ENCODE measurements at regions of chr12 and their contacts with region 1.

Region 1: GRCh38 chr12:65169320-65170208 is at the start of gene LEMD3:
- DNase-seq: peak; percentile 95
- H3K4me3 Mint-ChIP-seq: peak within 1 kb of the TSS; percentile 99
- H3K27ac Mint-ChIP-seq: peak within 1 kb of the TSS; percentile 97
- H3K4me1 Mint-ChIP-seq: peaks cover 26% of the 10 kb centered on the region
- H3K27me3 Mint-ChIP-seq: no peaks in the 10 kb centered on the region
- total RNA-seq, gene LEMD3: 16.5 to 19.5 TPM

Region 2: DNA sequence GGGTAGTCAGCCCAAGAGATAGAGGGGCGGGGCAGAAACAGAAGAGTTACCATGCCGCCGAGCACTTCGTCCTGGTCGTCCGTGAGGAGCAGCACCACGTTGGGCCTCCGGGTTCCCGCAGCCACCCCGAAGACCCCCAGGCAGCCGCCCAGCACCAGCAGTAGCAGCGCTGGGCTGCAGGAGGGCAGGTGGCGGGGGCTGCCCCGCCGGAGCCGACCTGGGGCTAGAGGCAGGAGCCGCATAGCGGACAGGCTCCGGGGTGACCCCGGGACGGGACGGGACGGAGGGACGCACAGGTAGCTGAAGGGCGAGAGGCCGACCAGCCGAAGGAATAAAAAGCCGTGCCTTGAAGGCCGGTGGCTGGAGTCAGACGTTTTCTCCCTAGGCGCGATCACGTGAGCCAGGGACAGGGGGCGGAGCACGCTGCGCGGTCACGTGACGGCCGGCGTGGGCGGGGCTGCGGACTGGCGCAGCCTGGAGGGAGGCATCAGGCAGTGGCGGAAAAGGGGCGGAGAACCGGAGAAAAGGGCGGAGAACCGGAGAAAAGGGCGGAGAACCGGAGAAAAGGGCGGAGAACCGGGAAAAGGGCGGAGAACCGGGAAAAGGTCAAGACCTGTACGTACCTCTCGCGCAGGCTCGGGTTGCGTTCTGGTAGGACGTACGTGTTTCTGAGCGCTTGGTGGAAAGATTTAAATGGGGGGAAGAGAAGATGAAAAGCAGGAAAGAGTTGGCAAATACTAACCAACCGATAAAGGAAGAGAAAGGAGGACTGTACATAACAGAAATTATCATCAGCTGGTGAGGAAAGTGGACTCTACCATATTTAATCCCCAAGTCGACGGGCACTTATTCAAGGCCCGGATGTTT is 410.3 kb before region 1 on chr12 and contains the start of gene GNS:
- CTCF ChIA-PET with region 1: no interaction called
- POLR2A ChIA-PET with region 1: no interaction called
- intact Hi-C with region 1: loop called (anchors 2 kb)
- DNase-seq: peak; percentile 97
- H3K4me3 Mint-ChIP-seq: peak within 1 kb of the TSS; percentile 85
- H3K27ac Mint-ChIP-seq: peak within 1 kb of the TSS; percentile 90
- H3K4me1 Mint-ChIP-seq: peaks cover 43% of the 10 kb centered on the region
- H3K27me3 Mint-ChIP-seq: no peaks in the 10 kb centered on the region
- total RNA-seq, gene GNS: 21.2 to 23.1 TPM

Region 3: DNA sequence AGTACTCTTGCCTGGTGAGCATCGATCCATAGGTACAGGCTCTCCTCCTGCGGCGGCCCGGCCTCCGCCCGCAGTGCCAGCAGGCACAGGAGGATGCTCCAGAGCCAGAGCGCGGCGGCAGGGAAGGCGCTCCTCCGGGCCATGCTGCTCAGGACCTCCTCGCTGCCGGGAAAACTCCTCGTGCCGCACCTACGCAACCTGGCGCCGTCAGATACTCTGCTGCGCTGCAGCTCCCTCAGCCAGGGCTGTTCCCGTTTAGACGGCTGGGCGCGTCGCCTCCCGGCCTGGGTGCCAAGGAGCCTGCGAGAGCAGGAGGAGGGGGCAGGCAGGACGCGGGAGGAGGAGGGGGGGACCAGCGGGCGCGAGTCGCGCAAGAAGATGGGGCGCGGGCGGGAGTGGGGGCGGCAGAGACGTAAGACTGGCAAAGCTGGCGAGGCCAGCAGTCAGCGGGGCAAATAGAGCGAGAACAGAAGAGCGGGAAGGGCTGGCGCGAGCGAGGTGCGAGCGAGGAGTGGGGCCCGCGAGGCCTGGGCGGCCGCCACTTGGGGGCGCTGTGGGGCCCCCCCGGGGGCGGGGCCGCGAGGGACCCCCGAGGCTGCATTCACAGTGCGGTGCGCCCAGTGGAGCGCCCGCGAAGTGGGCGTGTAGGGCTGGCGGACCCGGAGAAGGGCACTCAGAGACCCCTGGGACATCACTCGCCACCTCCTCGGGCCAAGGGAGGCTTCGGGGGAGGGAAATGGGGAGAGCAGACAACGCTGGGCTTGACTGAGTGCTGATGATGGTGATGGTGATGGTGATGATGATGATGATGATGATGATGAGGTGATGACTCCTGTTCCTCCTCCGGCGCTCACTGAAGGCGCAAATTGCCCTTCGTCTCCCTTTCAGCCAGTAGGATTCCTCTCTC is 48.3 kb before region 1 on chr12 and contains the start of gene WIF1:
- CTCF ChIA-PET with region 1: interaction called, 4 read pairs
- POLR2A ChIA-PET with region 1: no interaction called
- intact Hi-C with region 1: loop called (anchors 5 kb)
- DNase-seq: peak; percentile 29
- H3K4me3 Mint-ChIP-seq: no peak within 1 kb of the TSS
- H3K27ac Mint-ChIP-seq: no peak within 1 kb of the TSS
- H3K4me1 Mint-ChIP-seq: peaks cover 6% of the 10 kb centered on the region
- H3K27me3 Mint-ChIP-seq: peaks cover 35% of the 10 kb centered on the region
- total RNA-seq, gene WIF1: 0.12 TPM in 1 of 2 experiments, not detected in the other

Region 4: GRCh38 chr12:65156366-65156841 is 13.2 kb before region 1 on chr12:
- CTCF ChIA-PET with region 1: interaction called, 12 read pairs
- POLR2A ChIA-PET with region 1: interaction called, 21 read pairs
- intact Hi-C with region 1: loop called (anchors 1 kb)
- DNase-seq: peak; percentile 14
- H3K4me3 Mint-ChIP-seq: peak overlapping the region; percentile 9
- H3K27ac Mint-ChIP-seq: peak overlapping the region; percentile 35
- H3K4me1 Mint-ChIP-seq: peaks cover 16% of the 10 kb centered on the region
- H3K27me3 Mint-ChIP-seq: peaks cover 13% of the 10 kb centered on the region

Region 5: GRCh38 chr12:65209655-65210043 is 40.1 kb after region 1 on chr12:
- CTCF ChIA-PET with region 1: no interaction called
- POLR2A ChIA-PET with region 1: no interaction called
- intact Hi-C with region 1: loop called (anchors 2 kb)
- DNase-seq: no peak
- H3K4me3 Mint-ChIP-seq: no peak overlapping the region
- H3K27ac Mint-ChIP-seq: peak overlapping the region; percentile 23
- H3K4me1 Mint-ChIP-seq: peaks cover 45% of the 10 kb centered on the region
- H3K27me3 Mint-ChIP-seq: no peaks in the 10 kb centered on the region

Region 6: GRCh38 chr12:65232476-65233077 is 63.0 kb after region 1 on chr12:
- CTCF ChIA-PET with region 1: interaction called, 12 read pairs
- POLR2A ChIA-PET with region 1: no interaction called
- intact Hi-C with region 1: loop called (anchors 1 kb)
- DNase-seq: no peak
- H3K4me3 Mint-ChIP-seq: no peak overlapping the region
- H3K27ac Mint-ChIP-seq: no peak overlapping the region
- H3K4me1 Mint-ChIP-seq: peaks cover 6% of the 10 kb centered on the region
- H3K27me3 Mint-ChIP-seq: no peaks in the 10 kb centered on the region

Region 7: DNA sequence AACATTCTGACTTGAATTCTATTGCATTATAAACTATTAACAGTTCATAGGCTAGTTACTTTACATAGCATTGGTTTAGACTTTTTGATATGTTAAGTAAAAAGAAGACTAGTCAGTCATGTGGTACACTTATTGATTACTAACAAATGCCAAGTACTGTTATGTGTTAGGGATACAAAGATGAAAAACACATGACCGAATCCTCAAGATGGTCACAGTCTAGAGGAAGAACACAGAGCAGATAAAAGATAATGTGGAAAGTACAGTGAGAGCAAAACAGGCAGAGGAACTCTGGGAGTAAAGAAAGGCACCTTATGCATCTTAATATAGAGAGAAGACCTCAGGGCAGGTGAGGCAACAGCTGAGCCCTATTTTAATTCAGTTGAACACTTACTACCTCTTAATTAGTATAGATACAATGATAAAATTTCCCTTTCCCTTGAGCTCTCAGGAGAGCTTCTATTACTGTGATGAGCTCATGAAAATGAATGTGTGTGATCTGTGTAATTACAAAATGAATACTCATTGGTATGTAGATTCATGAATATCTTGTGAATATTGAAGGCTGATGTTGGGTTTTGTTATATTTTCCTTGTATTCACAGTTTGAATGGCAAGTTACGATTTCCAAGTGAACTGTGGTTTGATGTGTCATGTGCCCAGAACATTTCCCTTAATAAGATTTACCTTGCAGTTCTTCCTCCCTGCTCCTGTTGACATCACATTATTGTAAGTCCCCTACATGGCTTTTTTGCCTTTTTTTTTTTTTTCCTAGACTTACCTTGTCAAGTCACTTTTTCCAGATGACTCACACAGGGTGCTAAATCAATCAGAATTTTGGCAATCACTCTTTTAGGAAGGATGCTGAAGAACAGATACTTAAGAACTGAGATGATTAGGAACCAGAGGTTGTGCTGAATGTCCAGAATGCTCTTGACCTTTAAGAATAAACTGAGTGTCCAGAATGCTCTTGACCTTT is 79.4 kb after region 1 on chr12:
- CTCF ChIA-PET with region 1: no interaction called
- POLR2A ChIA-PET with region 1: interaction called, 5 read pairs
- intact Hi-C with region 1: loop called (anchors 2 kb)
- DNase-seq: no peak
- H3K4me3 Mint-ChIP-seq: no peak overlapping the region
- H3K27ac Mint-ChIP-seq: peak overlapping the region; percentile 71
- H3K4me1 Mint-ChIP-seq: peaks cover 17% of the 10 kb centered on the region
- H3K27me3 Mint-ChIP-seq: no peaks in the 10 kb centered on the region